ENCODE measurements at regions of chr9 and their contacts with region 1.

Region 1: DNA sequence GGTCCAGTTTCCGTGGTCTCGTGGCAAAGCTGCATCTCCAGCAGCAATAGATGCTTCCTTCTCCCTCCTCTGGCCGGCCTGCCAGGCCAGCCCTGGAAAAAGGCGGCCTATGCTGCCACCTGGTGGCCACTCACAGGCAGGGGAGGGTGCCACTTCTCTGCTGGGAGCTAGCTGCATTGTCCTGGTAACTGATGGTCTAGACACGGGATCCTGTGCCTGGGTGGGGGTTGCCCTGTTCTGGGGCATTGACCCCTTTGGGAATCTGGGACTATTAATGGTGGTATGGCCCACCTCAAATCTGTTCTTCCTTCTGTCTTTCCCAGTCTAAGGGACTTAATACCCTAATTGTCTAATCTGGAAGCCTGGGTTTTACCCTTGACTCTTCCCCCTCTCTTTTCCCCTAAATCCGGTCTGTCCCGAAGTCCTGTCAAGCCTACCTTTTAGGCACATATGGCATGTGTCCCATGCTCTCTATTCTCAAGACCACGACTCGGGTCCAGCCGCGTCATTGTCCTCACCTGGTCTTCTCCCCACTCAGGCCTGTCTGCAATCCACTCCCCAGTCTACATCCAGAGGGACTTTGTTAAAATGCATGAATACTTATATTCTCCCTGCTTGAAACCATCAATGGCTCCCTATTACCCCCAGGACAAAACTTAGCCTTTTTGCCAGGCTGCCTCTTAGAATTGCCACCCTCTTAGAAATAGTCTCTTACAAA is 20.0 kb upstream of the PTGS1 start:
- DNase-seq: peak; percentile 89
- H3K4me3 ChIP-seq: peak overlapping the region in 1 of 2 experiments; percentile 31; a peak in 1 of 4 replicates
- H3K27ac ChIP-seq: no peak overlapping the region
- H3K4me1 ChIP-seq: peaks cover 0 to 6% of the 10 kb centered on the region in 2 experiments; a peak in 1 of 4 replicates
- H3K27me3 ChIP-seq: no peaks in the 10 kb centered on the region
- CTCF ChIP-seq: peak; percentile 91
- EP300 ChIP-seq: no peak
- RAD21 ChIP-seq: peak; percentile 99

Region 2: GRCh38 chr9:122107291-122107805 is 243.4 kb before region 1 on chr9:
- CTCF ChIA-PET with region 1: interaction called, 29 read pairs
- POLR2A ChIA-PET with region 1: no interaction called
- DNase-seq: peak; percentile 12
- H3K4me3 ChIP-seq: no peak overlapping the region
- H3K27ac ChIP-seq: no peak overlapping the region
- H3K4me1 ChIP-seq: no peaks in the 10 kb centered on the region
- H3K27me3 ChIP-seq: no peaks in the 10 kb centered on the region
- CTCF ChIP-seq: no peak
- EP300 ChIP-seq: no peak
- RAD21 ChIP-seq: no peak

Region 3: DNA sequence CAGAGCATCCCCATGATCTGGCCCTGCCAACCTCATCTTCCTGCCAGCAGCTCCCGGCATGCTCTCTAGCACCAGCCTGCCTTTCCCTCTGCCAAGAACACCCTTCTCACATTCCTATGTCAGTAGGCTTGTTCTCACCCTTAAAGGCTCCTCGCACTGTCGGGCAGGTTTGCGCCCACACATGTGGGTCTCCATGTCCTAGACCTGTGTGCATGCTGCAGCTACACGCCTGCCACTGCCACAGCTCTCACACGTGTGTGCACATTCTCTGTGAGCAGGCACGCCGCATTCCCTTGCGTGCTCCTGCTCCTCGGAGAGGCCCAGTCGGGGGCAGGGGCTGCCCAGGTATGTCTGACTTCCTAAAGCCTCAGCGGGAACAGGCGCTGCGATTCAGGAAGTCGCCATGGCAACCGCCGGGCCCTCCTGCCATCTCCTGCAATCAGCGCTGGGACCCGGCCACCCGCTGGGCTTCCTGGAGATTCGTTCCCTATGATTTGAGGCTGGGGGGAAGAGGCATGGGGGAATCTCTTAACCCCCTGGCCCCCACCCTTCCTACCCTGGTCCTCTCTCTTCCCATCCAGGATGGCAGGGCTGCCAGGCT is 219.3 kb before region 1 on chr9:
- CTCF ChIA-PET with region 1: interaction called, 528 read pairs
- POLR2A ChIA-PET with region 1: no interaction called
- DNase-seq: no peak
- H3K4me3 ChIP-seq: no peak overlapping the region
- H3K27ac ChIP-seq: no peak overlapping the region
- H3K4me1 ChIP-seq: peaks cover 0 to under 1% of the 10 kb centered on the region in 2 experiments; a peak in 2 of 4 replicates
- H3K27me3 ChIP-seq: no peaks in the 10 kb centered on the region
- CTCF ChIP-seq: no peak
- EP300 ChIP-seq: no peak
- RAD21 ChIP-seq: no peak

Region 4: GRCh38 chr9:122329597-122329996 is 21.2 kb before region 1 on chr9:
- CTCF ChIA-PET with region 1: interaction called, 26 read pairs
- POLR2A ChIA-PET with region 1: no interaction called
- DNase-seq: no peak
- H3K4me3 ChIP-seq: no peak overlapping the region
- H3K27ac ChIP-seq: no peak overlapping the region
- H3K4me1 ChIP-seq: peaks cover 0 to 3% of the 10 kb centered on the region in 2 experiments; a peak in 1 of 4 replicates
- H3K27me3 ChIP-seq: no peaks in the 10 kb centered on the region
- CTCF ChIP-seq: no peak
- EP300 ChIP-seq: no peak
- RAD21 ChIP-seq: no peak

Region 5: DNA sequence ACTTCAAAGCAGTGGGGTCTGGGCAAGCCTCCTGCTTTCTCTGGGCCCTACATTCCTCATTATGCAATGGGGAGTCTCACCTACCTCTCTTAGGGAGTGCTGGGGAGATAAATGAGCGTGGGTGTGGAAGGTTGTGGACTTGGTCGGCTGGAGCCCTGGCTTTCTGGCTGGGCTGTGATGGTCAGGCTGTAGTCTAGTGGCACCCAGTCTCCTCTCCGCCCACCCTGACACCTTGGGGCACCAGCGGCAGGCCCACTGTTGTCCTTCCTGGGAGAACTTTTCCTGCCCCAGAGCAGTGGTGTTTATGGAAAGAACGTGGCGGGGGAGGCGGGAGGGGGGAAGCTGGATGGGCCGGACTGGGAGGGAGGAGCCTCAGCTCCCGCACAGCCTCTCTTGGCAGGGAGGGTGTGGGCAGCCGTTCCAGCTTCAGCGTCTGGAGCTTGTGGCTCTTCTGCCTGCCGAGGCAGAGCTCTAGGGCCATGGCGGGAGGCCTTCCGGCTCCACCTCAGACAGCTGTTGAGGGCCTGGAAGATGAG is 24.2 kb after region 1 on chr9:
- CTCF ChIA-PET with region 1: interaction called, 25 read pairs
- POLR2A ChIA-PET with region 1: no interaction called
- DNase-seq: peak; percentile 68
- H3K4me3 ChIP-seq: no peak overlapping the region
- H3K27ac ChIP-seq: no peak overlapping the region
- H3K4me1 ChIP-seq: peaks cover 9 to 31% of the 10 kb centered on the region in 2 experiments; a peak in 3 of 4 replicates
- H3K27me3 ChIP-seq: no peaks in the 10 kb centered on the region
- CTCF ChIP-seq: no peak
- EP300 ChIP-seq: no peak
- RAD21 ChIP-seq: no peak

Measured in SK-N-SH (cell line).